GM23248 (cell line): ENCODE measurements at regions of chr11 and their contacts with region 1.

Region 1: DNA sequence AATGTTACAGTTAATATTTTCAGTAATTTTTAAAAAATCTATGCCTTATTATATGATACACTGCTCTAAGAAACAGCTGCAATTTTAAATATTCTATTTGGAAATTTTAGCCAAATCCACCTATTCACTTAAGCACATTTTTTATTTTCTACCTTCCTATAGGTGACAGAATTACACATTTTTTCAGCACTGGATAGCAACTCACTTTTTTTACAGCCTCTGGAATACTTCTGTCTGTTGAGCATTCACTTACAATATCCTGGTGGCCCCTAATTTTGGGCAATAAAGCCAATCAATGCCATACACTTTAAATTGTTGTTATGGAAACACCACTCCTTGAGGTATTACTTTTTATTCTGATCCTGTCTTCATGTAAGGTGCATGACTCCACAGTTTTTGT is 22.4 kb downstream of the OR4A15 start:
- DNase-seq: no peak
- H3K4me3 ChIP-seq: no peak overlapping the region
- H3K27ac ChIP-seq: no peak overlapping the region
- H3K4me1 ChIP-seq: no peaks in the 10 kb centered on the region
- H3K27me3 ChIP-seq: no peaks in the 10 kb centered on the region

Region 2: DNA sequence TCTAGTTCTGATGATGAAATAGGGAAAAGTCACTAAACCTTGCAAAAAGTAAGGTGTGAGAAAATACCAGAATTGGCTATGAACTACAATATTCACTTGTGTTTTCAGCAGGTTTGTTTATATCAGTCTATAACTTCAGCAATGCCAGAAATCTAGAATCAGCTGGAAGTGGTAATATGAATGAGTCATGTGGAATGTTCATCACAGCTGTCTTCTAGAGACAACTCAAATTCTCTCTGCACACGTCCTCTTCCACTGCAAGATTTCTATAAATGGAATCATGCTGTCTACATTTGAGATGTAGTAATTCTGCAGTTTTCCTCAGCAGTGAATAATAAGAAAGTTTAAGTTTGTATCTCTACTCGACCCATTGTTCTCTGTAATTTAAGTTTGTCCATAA is 67.5 kb after region 1 on chr11:
- in situ Hi-C with region 1: loop called (anchors 10 kb)
- DNase-seq: no peak
- H3K4me3 ChIP-seq: no peak overlapping the region
- H3K27ac ChIP-seq: no peak overlapping the region
- H3K4me1 ChIP-seq: no peaks in the 10 kb centered on the region
- H3K27me3 ChIP-seq: no peaks in the 10 kb centered on the region